GM12878 (cell line): ENCODE measurements at regions of chr16 and their contacts with region 1.

Region 1: DNA sequence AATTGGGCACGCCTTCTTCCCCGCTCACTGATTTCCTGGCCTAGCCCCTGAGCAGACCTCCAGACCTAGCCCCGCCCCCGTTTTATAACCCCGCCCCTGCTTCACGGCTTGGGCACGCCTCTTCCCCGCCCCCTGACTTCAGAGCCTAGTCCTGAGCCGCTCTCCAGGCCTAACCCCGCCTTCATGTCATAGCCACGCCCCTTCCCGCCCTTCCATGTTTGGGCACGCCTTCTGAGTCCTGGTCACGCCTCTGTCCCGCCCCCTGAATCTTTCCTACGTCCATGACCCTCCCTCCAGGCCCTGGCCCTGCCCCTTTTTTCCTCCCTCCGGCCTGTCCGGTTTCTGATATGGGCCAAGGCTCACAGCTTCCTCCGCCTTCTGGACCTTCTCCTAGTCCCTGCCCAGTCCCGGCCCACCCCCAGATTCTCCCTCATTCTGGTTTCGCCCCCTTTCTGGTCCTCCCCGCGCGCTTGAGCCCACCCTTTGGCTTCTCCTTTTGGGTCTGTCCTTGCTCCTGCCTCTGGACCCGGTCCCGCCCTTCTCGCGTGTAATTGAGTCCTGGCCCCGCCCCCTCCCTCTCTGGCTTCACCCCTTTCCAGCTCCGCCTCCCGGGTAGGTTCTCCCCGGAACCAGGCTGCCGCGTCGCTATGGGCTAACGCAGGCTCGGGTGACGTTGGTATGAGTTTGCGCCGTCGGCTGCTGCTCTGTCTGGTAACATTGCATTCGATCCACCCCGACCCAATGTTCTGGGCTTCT is 15.1 kb upstream of the EEF2K start:
- DNase-seq: peak; percentile 98
- ATAC-seq: peak; percentile 67
- H3K4me3 ChIP-seq: peak overlapping the region; percentile 81
- H3K27ac ChIP-seq: peak overlapping the region; percentile 90
- H3K4me1 ChIP-seq: peaks cover 43% of the 10 kb centered on the region
- H3K27me3 ChIP-seq: no peaks in the 10 kb centered on the region
- CTCF ChIP-seq: no peak
- EP300 ChIP-seq: no peak
- POLR2A ChIP-seq: peak; percentile 85
- RAD21 ChIP-seq: no peak

Region 2: GRCh38 chr16:21952793-21953540 is 238.0 kb before region 1 on chr16 and contains the start of gene UQCRC2:
- CTCF ChIA-PET with region 1: interaction called, 22 read pairs
- POLR2A ChIA-PET with region 1: interaction called, 6 read pairs
- RAD21 ChIA-PET with region 1: interaction called, 9 read pairs
- SMC1A ChIA-PET with region 1: interaction called, 15 read pairs
- in situ Hi-C with region 1: no loop called
- intact Hi-C with region 1: no loop called
- DNase-seq: peak; percentile 90
- ATAC-seq: peak; percentile 91
- H3K4me3 ChIP-seq: peak within 1 kb of the TSS; percentile 96
- H3K27ac ChIP-seq: peak within 1 kb of the TSS; percentile 99
- H3K4me1 ChIP-seq: peaks cover 24% of the 10 kb centered on the region
- H3K27me3 ChIP-seq: no peaks in the 10 kb centered on the region
- CTCF ChIP-seq: no peak
- EP300 ChIP-seq: peak; percentile 42 to 54; a peak in 2 of 4 replicates
- POLR2A ChIP-seq: peak; percentile 94
- RAD21 ChIP-seq: no peak
- polyA plus RNA-seq, gene UQCRC2: 256 to 277 TPM

Region 3: DNA sequence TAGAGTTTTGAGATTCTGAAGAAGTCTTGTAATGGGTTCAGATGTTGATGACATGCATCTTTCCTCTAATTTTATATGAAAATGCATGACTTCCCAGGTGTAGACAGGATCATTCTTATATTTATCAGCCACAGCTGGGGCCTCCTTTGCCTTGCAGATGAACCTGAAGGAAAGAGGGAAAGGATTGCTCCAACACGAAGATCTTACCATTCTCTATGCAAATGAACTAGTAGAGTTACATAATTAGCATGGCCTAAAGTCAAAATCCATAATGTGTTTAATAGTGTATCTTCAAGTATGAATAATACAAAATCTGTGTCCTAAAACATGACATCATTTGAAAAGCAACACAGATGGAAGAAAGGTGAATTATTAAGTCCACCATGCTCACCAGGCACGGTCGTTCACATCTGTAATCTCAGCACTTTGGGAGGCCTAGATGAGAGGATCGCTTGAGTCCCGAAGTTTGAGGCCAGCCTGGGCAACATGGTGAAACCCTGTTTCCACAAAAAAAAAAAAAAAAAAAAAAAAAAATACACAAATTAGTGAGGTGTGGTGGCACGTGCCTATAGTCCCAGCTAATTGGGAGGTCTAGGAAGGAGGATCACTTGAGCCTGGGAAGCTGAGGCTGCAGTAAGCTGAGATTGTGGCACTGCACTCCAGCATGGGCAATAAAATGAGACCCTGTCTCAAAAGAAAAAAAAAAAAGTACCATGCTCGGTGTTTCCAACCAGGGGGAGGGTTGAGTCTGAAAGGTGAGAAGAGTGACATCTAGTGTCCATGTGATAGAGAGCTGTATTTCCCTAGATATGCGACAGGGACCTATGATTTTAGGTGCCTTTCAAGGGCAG is 92.3 kb before region 1 on chr16:
- CTCF ChIA-PET with region 1: interaction called, 58 read pairs
- POLR2A ChIA-PET with region 1: no interaction called
- RAD21 ChIA-PET with region 1: interaction called, 18 read pairs
- SMC1A ChIA-PET with region 1: interaction called, 23 read pairs
- in situ Hi-C with region 1: loop called (anchors 5 kb)
- intact Hi-C with region 1: loop called (anchors 1 kb)
- DNase-seq: peak; percentile 17
- ATAC-seq: peak; percentile 97
- H3K4me3 ChIP-seq: no peak overlapping the region
- H3K27ac ChIP-seq: no peak overlapping the region
- H3K4me1 ChIP-seq: no peaks in the 10 kb centered on the region
- H3K27me3 ChIP-seq: no peaks in the 10 kb centered on the region; a peak in 1 of 4 replicates
- CTCF ChIP-seq: peak; percentile 68 to 75 (median 69)
- EP300 ChIP-seq: no peak
- POLR2A ChIP-seq: no peak
- RAD21 ChIP-seq: peak; percentile 69

Region 4: GRCh38 chr16:22206013-22206841 is 15.3 kb after region 1 on chr16 and contains the start of gene EEF2K:
- CTCF ChIA-PET with region 1: interaction called, 91 read pairs
- POLR2A ChIA-PET with region 1: interaction called, 104 read pairs
- RAD21 ChIA-PET with region 1: interaction called, 74 read pairs
- SMC1A ChIA-PET with region 1: interaction called, 24 read pairs
- in situ Hi-C with region 1: no loop called
- intact Hi-C with region 1: loop called (anchors 1 kb)
- DNase-seq: peak; percentile 83
- ATAC-seq: peak; percentile 92
- H3K4me3 ChIP-seq: peak within 1 kb of the TSS; percentile 88
- H3K27ac ChIP-seq: peak within 1 kb of the TSS; percentile 65
- H3K4me1 ChIP-seq: peaks cover 11% of the 10 kb centered on the region
- H3K27me3 ChIP-seq: no peaks in the 10 kb centered on the region
- CTCF ChIP-seq: peak; percentile 76 to 93 (median 76)
- EP300 ChIP-seq: peak; percentile 28 to 37; a peak in 2 of 4 replicates
- POLR2A ChIP-seq: peak; percentile 81
- RAD21 ChIP-seq: peak; percentile 59
- polyA plus RNA-seq, gene EEF2K: 2.0 to 2.4 TPM

Region 5: GRCh38 chr16:22262460-22262859 is 71.5 kb after region 1 on chr16:
- CTCF ChIA-PET with region 1: no interaction called
- POLR2A ChIA-PET with region 1: no interaction called
- RAD21 ChIA-PET with region 1: no interaction called
- SMC1A ChIA-PET with region 1: no interaction called
- in situ Hi-C with region 1: no loop called
- intact Hi-C with region 1: no loop called
- DNase-seq: no peak
- ATAC-seq: no peak
- H3K4me3 ChIP-seq: no peak overlapping the region
- H3K27ac ChIP-seq: no peak overlapping the region
- H3K4me1 ChIP-seq: no peaks in the 10 kb centered on the region
- H3K27me3 ChIP-seq: no peaks in the 10 kb centered on the region
- CTCF ChIP-seq: no peak
- EP300 ChIP-seq: no peak
- POLR2A ChIP-seq: no peak
- RAD21 ChIP-seq: no peak

Region 6: GRCh38 chr16:22297114-22297878 is 106.3 kb after region 1 on chr16 and contains the start of gene POLR3E:
- CTCF ChIA-PET with region 1: interaction called, 132 read pairs
- POLR2A ChIA-PET with region 1: interaction called, 21 read pairs
- RAD21 ChIA-PET with region 1: interaction called, 62 read pairs
- SMC1A ChIA-PET with region 1: interaction called, 86 read pairs
- in situ Hi-C with region 1: loop called (anchors 5 kb)
- intact Hi-C with region 1: loop called (anchors 1 kb)
- DNase-seq: no peak
- ATAC-seq: peak; percentile 89
- H3K4me3 ChIP-seq: peak within 1 kb of the TSS; percentile 88
- H3K27ac ChIP-seq: peak within 1 kb of the TSS; percentile 85
- H3K4me1 ChIP-seq: peaks cover 13% of the 10 kb centered on the region
- H3K27me3 ChIP-seq: no peaks in the 10 kb centered on the region
- CTCF ChIP-seq: peak; percentile 90 to 97 (median 91)
- EP300 ChIP-seq: peak; percentile 4 to 92; a peak in 1 of 4 replicates
- POLR2A ChIP-seq: peak; percentile 90
- RAD21 ChIP-seq: peak; percentile 86
- polyA plus RNA-seq, gene POLR3E: 11.1 to 15.5 TPM

Region 7: GRCh38 chr16:22413819-22414218 is 222.9 kb after region 1 on chr16:
- CTCF ChIA-PET with region 1: no interaction called
- POLR2A ChIA-PET with region 1: no interaction called
- RAD21 ChIA-PET with region 1: no interaction called
- SMC1A ChIA-PET with region 1: no interaction called
- in situ Hi-C with region 1: no loop called
- intact Hi-C with region 1: no loop called
- DNase-seq: no peak
- ATAC-seq: no peak
- H3K4me3 ChIP-seq: no peak overlapping the region
- H3K27ac ChIP-seq: no peak overlapping the region
- H3K4me1 ChIP-seq: no peaks in the 10 kb centered on the region
- H3K27me3 ChIP-seq: no peaks in the 10 kb centered on the region
- CTCF ChIP-seq: no peak
- EP300 ChIP-seq: no peak
- POLR2A ChIP-seq: no peak
- RAD21 ChIP-seq: no peak